ENCODE measurements at regions of chr18 and their contacts with region 1.

Region 1: GRCh38 chr18:58529714-58530354 is 99.1 kb downstream of the ALPK2 start:
- DNase-seq: peak; percentile 66
- ATAC-seq: peak; percentile 59 to 74

Region 2: DNA sequence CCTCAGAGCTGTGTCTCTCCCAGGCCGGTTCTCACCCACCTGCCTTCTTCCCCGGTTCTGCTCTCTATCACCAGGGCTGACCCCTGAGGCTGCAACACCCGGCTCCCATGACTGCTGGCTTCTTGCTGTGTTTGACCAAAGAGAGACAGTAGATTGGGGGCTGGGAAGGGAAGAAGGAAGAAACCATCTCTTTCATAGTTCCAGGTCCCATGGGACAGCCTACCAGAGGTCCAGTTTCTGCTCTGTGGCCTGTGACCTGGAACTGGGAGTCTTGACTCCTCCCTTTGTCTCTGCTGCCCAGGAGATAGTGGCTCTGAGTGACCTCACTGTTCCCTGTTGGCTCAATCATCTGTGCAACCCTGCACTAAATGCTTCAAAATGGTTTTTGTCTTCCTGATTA is 61.0 kb after region 1 on chr18:
- intact Hi-C with region 1: loop called in 1 of 2 experiments (anchors 10 kb)
- DNase-seq: no peak
- ATAC-seq: peak in 1 of 2 donors; percentile 21

Region 3: GRCh38 chr18:58669731-58670378 is 140.0 kb after region 1 on chr18:
- intact Hi-C with region 1: loop called in 1 of 2 experiments (anchors 10 kb)
- DNase-seq: no peak
- ATAC-seq: no peak

Region 4: GRCh38 chr18:58761241-58761969 is 231.6 kb after region 1 on chr18:
- intact Hi-C with region 1: loop called (anchors 1 to 5 kb)
- DNase-seq: no peak
- ATAC-seq: peak; percentile 37 to 39

Region 5: DNA sequence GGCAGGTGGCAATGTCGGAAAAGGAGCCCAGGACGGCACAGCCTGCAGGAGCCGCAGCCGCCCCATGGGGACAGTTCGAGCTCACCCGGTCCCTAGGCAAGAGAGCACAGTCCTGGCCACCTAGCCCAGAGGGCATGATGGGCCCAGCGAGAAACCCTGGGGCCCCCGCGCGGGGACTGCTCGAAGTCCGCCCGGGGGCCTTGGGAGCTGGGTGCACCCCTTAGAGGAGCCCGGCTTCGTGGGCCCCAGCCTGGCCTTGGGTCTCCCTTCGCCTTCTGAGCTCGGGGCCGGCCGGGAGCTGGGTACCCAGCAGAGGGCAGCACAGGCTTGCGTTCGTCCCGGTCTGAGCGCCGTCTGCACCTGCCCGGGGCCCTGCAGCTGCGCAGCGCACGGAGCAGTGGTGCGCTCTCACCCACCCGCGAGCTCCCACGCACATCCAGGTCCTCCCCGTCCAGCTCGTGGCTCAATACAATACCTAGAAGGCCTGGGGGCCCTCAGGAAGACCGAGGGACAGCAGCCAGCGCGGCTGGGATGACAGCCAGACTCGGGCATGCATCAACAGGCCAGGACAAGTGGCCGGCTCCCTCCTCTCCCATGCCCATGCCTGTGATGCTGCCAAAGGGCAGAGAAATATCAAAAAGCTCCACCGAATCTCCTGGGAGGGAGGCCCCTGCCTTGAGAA is 238.6 kb after region 1 on chr18:
- intact Hi-C with region 1: loop called (anchors 1 to 5 kb)
- DNase-seq: peak; percentile 77
- ATAC-seq: peak; percentile 90 to 96

Region 6: DNA sequence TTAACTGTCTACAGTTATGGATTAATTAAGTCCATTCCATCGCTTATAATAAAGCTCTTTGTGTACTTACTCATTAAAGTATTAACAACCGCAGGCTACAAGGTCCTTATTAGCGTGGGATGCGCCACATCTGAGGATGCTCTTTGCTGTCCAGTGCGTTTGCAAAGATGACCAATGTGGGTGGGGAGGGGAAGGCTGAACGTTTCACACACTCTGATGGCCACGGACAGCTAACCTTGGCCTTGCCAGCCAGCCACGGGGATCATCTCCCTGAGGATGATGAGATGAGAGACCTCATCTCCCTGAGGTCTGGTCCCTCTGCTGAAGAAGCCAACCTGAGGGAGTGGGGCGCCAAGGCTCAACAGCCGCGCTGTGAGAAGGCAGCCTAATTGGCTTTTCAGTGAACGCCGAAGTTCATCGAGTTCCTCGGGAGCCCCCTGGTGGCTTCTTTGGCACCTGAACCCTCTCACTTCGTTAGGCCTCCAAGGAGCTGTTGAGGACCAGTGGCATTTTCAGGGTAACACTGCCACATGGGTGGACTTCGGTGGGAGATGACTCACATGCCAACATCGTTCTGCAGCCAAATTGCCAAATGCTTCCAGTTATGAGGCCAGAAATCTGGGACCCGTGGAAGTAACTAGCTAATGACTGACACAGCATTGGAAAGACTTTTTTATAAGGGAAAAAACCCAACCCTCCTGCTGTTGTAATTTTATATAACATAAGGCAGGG is 540.5 kb after region 1 on chr18:
- intact Hi-C with region 1: loop called in 1 of 2 experiments (anchors 10 kb)
- DNase-seq: peak; percentile 90
- ATAC-seq: peak; percentile 89 to 90

Measured in left cardiac atrium (tissue), 4 donors.